ENCODE measurements at regions of chr2 and their contacts with region 1.

Region 1: DNA sequence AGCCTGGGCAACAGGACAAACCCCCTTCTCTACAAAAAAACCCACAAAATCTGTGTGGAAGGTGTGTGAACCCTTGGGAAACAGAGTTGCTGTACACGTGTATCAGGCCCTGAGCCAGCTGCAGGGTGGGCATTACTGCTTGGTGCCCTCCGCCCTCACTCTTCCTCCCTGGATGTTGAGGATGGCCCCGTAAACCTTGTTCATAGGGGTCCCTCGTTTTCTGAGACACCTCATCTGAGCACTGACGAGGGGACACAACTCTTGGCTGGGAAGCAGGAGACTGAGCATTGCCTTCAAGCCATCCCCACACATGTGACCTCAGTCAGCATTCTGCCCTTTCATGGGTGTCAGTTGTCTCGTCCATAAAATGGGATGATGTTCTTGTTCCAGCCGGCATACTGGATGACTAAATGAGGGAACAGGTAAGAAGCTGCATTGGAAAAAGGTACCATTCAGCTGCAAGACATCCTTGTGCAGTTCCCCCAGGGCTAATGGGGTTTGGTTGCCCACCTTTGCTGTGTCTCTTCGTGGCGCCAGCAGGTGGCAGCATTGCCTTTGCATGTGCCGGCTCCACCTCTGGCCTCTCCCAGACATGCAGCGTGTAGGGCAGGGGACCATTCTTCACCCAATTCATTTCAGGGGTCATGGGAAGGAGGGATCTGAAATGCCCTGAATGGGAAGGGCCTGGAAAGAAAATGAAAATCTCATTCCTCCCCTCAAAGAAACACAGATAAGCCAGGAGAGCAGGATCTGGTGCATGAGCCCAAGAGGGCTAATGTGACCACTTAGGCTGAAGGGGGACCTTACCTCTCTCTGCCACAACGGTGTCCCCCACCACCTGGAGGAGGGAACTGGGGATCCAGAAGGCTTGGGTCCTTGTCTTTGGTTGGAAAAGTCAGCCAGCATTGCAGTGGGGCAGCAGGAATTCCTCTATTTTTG is 36.4 kb upstream of the HAAO start:
- DNase-seq: no peak
- H3K4me3 ChIP-seq: no peak overlapping the region
- CTCF ChIP-seq: peak; percentile 90

Region 2: GRCh38 chr2:42770288-42771131 is 58.2 kb before region 1 on chr2:
- in situ Hi-C with region 1: no loop called
- DNase-seq: peak; percentile 8
- H3K4me3 ChIP-seq: no peak overlapping the region
- CTCF ChIP-seq: peak; percentile 48

Region 3: GRCh38 chr2:43559391-43560230 is 730.9 kb after region 1 on chr2:
- in situ Hi-C with region 1: loop called (anchors 25 kb)
- DNase-seq: no peak
- H3K4me3 ChIP-seq: no peak overlapping the region
- CTCF ChIP-seq: no peak

Measured in astrocyte of the cerebellum (primary cell).